ENCODE measurements at regions of chr7 and their contacts with region 1.

Region 1: GRCh38 chr7:97117372-97118188 is at the start of gene SDHAF3:
- DNase-seq: peak; percentile 90
- ATAC-seq: peak; percentile 94
- H3K4me3 ChIP-seq: peak within 1 kb of the TSS; percentile 93
- H3K27ac ChIP-seq: peak within 1 kb of the TSS; percentile 75
- H3K4me1 ChIP-seq: peaks cover 8% of the 10 kb centered on the region; the same call in 1 of the 2 replicates
- H3K27me3 ChIP-seq: no peaks in the 10 kb centered on the region
- CTCF ChIP-seq: peak in 2 of 3 experiments; percentile 15 to 20; a peak in 2 of 6 replicates
- EP300 ChIP-seq: no peak
- POLR2A ChIP-seq: peak; percentile 97
- RAD21 ChIP-seq: no peak
- polyA plus RNA-seq, gene SDHAF3: 101 to 124 TPM

Region 2: DNA sequence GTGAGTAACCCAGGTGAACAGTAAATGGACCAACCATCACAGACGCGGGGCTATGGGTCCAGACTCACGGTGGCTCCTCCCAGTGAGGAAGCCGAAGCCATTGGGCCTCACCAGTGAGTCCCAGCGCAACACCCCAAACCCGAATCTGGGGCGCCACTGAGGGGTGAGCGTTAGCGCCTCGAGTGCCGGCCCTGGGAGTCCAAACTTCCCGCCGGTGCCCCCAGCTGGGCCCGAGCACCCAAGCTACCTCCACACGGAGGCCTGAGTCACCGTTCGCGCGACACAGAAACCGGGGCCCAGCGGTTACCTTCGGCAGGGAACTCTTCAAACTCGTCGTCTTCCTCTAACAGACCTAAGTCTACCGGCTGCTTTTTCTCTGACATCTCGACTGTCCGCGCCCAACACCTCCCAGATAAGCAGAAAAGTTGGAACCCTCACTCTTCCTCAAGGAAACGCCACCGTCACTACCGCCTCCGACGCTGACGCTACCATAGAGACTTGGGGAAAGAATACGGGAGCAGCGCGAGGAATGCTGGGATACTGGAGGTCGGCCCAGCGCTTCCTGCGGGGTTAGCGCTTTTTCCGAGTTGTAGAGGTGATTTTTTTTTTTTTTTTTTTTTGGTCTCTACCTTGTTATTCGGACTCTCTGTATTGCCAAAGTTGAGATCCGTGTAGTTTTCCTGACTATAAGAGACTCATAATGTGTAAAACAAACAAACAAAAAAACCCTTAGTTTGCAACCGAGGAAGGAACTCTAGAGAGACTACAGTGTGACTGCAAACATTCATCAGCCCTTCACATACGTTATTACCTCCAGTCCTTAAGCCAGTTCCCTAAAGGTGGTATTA is 408.0 kb before region 1 on chr7 and contains the start of gene SEM1:
- CTCF ChIA-PET with region 1: no interaction called
- POLR2A ChIA-PET with region 1: no interaction called
- RAD21 ChIA-PET with region 1: no interaction called
- SMC1A ChIA-PET with region 1: no interaction called
- in situ Hi-C with region 1: no loop called
- intact Hi-C with region 1: no loop called
- DNase-seq: peak; percentile 40
- ATAC-seq: peak; percentile 94
- H3K4me3 ChIP-seq: peak within 1 kb of the TSS; percentile 90
- H3K27ac ChIP-seq: peak within 1 kb of the TSS; percentile 78
- H3K4me1 ChIP-seq: no peaks in the 10 kb centered on the region; the same call in 1 of the 2 replicates
- H3K27me3 ChIP-seq: no peaks in the 10 kb centered on the region
- CTCF ChIP-seq: no peak
- EP300 ChIP-seq: no peak
- POLR2A ChIP-seq: peak; percentile 82
- RAD21 ChIP-seq: no peak
- polyA plus RNA-seq, gene SEM1: 504 to 606 TPM

Region 3: GRCh38 chr7:97179454-97180104 is 62.0 kb after region 1 on chr7:
- CTCF ChIA-PET with region 1: interaction called, 11 read pairs
- POLR2A ChIA-PET with region 1: no interaction called
- RAD21 ChIA-PET with region 1: interaction called, 4 read pairs
- SMC1A ChIA-PET with region 1: no interaction called
- in situ Hi-C with region 1: no loop called
- intact Hi-C with region 1: no loop called
- DNase-seq: peak; percentile 8
- ATAC-seq: peak; percentile 89
- H3K4me3 ChIP-seq: no peak overlapping the region
- H3K27ac ChIP-seq: no peak overlapping the region
- H3K4me1 ChIP-seq: no peaks in the 10 kb centered on the region
- H3K27me3 ChIP-seq: no peaks in the 10 kb centered on the region
- CTCF ChIP-seq: peak; percentile 62 to 84 (median 71)
- EP300 ChIP-seq: no peak
- POLR2A ChIP-seq: no peak
- RAD21 ChIP-seq: peak; percentile 68

Region 4: DNA sequence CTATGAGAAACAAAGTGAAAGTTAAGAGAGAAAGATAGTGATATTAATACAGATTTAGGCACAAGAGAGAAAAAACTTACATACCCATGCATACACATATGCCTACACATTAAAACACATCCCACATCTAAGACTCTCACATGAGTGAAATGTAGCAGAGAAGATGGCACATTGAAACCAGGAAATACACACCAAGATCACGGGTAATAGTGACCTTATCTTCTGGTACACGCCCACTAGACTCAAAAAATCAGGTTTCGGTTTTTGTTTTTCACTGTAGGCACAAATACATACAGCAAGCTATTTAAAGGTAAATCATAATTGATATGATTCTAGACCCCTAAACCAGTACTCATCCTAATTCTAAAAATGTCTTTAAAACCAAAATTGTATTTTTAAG is 389.1 kb after region 1 on chr7:
- CTCF ChIA-PET with region 1: no interaction called
- POLR2A ChIA-PET with region 1: no interaction called
- RAD21 ChIA-PET with region 1: no interaction called
- SMC1A ChIA-PET with region 1: no interaction called
- in situ Hi-C with region 1: loop called (anchors 10 kb)
- intact Hi-C with region 1: no loop called
- DNase-seq: peak; percentile 20
- ATAC-seq: peak; percentile 93
- H3K4me3 ChIP-seq: peak overlapping the region; percentile 19; the same call in 1 of the 2 replicates
- H3K27ac ChIP-seq: no peak overlapping the region
- H3K4me1 ChIP-seq: no peaks in the 10 kb centered on the region
- H3K27me3 ChIP-seq: no peaks in the 10 kb centered on the region
- CTCF ChIP-seq: no peak
- EP300 ChIP-seq: no peak
- POLR2A ChIP-seq: no peak
- RAD21 ChIP-seq: no peak

Measured in GM12878 (cell line).